A549 (cell line): ENCODE measurements at regions of chr16 and their contacts with region 1.

Region 1: DNA sequence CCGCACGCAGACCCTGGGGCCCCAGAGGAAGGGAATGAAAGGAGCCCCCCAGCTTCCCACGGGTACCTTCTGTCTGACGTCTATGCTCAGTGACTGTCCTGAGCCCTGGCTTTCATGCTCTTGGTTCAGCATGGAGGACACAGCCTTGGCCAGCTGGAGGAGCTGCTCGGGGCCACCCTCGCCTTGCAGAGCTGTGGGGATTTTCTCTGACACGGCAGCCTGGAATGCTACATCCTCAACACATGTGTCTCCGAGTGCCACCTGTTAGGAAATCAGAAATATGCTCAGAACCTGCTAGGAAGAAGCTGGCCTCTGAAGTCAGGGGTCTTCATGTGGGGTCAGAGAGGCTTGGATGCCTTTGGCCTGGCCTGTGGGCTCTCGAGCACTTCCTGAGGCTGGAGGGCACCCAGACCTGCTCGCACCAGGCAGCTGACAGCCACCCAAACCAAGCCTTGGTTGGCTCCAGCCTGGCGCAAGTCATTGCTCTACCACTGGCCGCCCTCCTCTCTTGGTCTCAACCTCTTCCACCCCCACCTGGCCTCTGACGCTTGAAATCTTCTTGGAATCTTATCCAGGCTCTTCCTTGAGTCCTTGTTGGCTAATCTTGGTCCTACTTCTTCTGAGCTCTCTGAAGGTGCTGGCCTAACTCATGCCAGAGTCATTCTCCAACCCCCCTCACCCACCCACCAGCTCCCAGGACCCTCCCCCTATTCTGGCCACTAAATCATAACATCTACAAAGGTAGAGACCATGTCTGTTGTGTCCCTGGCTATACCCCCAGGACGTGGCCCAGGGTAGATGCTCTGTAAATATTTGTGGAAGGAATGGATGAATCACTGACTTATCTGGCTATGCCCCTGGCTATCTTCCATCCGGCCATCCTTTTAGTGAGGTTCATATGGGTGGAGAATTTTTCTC is 63.6 kb upstream of the BCO1 start:
- DNase-seq: peak; percentile 73 to 80
- ATAC-seq: peak; percentile 88 to 92
- H3K4me3 ChIP-seq: 0 out of 3 replicates have a peak overlapping the region, but pooled peaks have one; percentile 0
- H3K27ac ChIP-seq: peak overlapping the region; percentile 94 to 95
- H3K4me1 ChIP-seq: peaks cover 46% of the 10 kb centered on the region
- CTCF ChIP-seq: no peak
- EP300 ChIP-seq: peak in 1 of 2 experiments; percentile 28; a peak in 1 of 5 replicates
- POLR2A ChIP-seq: no peak
- RAD21 ChIP-seq: peak in 1 of 2 experiments; percentile 34; a peak in 2 of 5 replicates

Region 2: GRCh38 chr16:81155757-81156156 is 19.2 kb before region 1 on chr16:
- CTCF ChIA-PET with region 1: no interaction called
- POLR2A ChIA-PET with region 1: no interaction called
- DNase-seq: no peak
- ATAC-seq: 0 out of 6 replicates have a peak, but pooled peaks of 1 of the 2 experiments have one; percentile 37
- H3K4me3 ChIP-seq: no peak overlapping the region
- H3K27ac ChIP-seq: no peak overlapping the region
- H3K4me1 ChIP-seq: no peaks in the 10 kb centered on the region
- CTCF ChIP-seq: no peak
- EP300 ChIP-seq: no peak
- POLR2A ChIP-seq: no peak
- RAD21 ChIP-seq: no peak

Region 3: GRCh38 chr16:81189100-81189664 is 14.3 kb after region 1 on chr16:
- CTCF ChIA-PET with region 1: interaction called, 11 read pairs
- POLR2A ChIA-PET with region 1: no interaction called
- DNase-seq: no peak
- ATAC-seq: no peak; a peak in 1 of 6 replicates
- H3K4me3 ChIP-seq: no peak overlapping the region
- H3K27ac ChIP-seq: peak overlapping the region in 1 of 2 experiments; percentile 42; a peak in 1 of 6 replicates
- H3K4me1 ChIP-seq: peaks cover 18% of the 10 kb centered on the region
- CTCF ChIP-seq: no peak
- EP300 ChIP-seq: no peak
- POLR2A ChIP-seq: no peak
- RAD21 ChIP-seq: no peak